Activated naive CD4-positive, alpha-beta T cell treated with anti-CD3 and anti-CD28 coated beads for 36 hours (primary cell): ENCODE measurements at regions of chr12 and their contacts with region 1.

Region 1: GRCh38 chr12:102527171-102527720 is 46.9 kb upstream of the IGF1 start:
- DNase-seq: no peak
- H3K4me3 Mint-ChIP-seq: no peak overlapping the region
- H3K27ac Mint-ChIP-seq: no peak overlapping the region
- H3K4me1 Mint-ChIP-seq: no peaks in the 10 kb centered on the region
- H3K27me3 Mint-ChIP-seq: peaks cover 11% of the 10 kb centered on the region

Region 2: GRCh38 chr12:102454808-102455760 is 72.2 kb before region 1 on chr12:
- CTCF ChIA-PET with region 1: no interaction called
- intact Hi-C with region 1: loop called (anchors 2 kb)
- DNase-seq: no peak
- H3K4me3 Mint-ChIP-seq: no peak overlapping the region
- H3K27ac Mint-ChIP-seq: no peak overlapping the region
- H3K4me1 Mint-ChIP-seq: no peaks in the 10 kb centered on the region
- H3K27me3 Mint-ChIP-seq: peaks cover 12% of the 10 kb centered on the region

Region 3: DNA sequence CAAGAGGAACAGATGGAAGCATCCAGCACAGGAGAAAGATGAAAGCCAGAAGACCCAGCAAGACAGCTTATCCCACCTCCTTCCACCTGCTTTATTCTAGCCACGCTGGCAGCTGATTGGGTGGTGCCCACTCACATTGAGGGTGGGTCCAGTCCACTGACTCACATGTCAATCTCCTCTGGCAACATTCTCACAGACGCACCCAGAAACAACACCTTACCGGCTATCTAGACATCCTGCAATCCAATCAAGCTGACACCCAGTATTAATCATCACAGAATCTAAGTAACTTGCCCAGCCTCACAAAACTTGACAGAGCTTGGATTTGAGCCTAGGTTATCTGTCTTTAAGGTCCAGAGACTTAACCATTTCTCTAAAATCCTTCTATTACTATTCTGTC is 180.9 kb after region 1 on chr12:
- CTCF ChIA-PET with region 1: no interaction called
- intact Hi-C with region 1: no loop called
- DNase-seq: no peak
- H3K4me3 Mint-ChIP-seq: no peak overlapping the region
- H3K27ac Mint-ChIP-seq: no peak overlapping the region
- H3K4me1 Mint-ChIP-seq: no peaks in the 10 kb centered on the region
- H3K27me3 Mint-ChIP-seq: no peaks in the 10 kb centered on the region